Heart left ventricle (tissue), 16 donors: ENCODE measurements at regions of chr12 and their contacts with region 1.

Region 1: DNA sequence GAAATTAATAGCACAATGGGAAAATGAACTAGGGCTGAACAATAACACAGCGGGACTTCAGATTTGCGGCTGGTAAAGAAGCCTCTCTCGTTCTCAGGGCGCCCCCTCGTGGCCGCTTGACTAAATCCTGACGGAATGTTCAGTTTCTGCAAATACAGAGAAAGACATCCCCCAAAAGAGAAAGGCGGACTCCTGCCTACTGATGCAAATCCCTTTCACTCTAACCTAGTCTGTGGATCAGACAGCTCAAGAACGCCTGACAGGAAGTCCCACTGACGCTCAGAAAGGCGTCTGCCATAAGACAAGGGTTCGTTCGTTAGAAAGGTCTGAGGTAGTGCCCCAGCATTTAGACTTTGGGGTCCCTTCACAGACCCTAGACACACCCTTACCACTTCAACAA is 2.5 kb downstream of the NUAK1 start:
- DNase-seq: peak; percentile 87 to 92 (median 89)
- ATAC-seq: peak in 2 of 4 donors; percentile 10 to 47
- H3K4me3 ChIP-seq: peak overlapping the region; percentile 73 to 96 (median 90)
- H3K27ac ChIP-seq: peak overlapping the region; percentile 95 to 100 (median 97)
- H3K4me1 ChIP-seq: peaks cover 3 to 67% (median 50%) of the 10 kb centered on the region in 12 donors
- H3K27me3 ChIP-seq: peaks cover 0 to 33% (median 0%) of the 10 kb centered on the region in 9 donors
- CTCF ChIP-seq: peak; percentile 82 to 96 (median 89)
- POLR2A ChIP-seq: peak in 1 of 2 donors; percentile 36

Region 2: DNA sequence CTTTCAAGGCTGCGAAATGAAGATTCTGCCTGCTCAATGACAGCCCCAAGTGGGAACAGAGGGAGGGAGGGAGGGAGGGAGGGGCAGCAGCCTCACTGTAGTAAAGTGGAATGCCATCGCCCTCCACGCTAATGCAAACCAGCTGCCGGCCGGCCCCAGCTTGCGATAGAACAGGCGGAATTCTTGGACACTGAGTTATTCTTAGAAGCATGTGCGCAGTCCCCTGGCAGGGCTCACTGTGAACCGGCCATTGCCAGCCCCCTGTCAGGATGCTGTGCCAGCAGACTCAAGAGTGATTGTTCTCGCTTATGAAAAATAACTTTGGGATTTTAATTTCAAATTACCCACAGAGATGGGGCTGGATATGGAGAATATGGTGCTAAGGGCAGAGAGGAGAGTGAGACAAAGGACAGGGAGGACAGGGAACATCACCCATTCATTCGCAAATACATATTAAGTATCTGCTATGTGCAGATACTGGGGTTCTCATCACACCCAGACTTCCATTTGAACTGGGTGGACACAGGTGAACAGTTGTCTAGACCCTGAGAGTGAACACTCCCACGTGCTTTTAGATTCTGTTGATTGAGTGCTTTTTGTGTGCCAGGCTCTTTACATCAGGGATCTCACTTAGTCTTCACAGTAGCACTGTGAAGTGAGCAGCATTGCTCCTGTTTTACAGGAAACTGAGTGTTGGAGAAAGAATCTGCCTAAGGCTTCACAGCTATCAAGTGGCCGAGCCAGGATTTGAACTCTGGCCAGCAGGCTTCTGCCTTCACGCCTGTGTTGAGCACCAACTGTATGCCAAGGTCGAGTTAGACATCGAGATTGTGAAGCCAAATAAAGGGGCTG is 612.9 kb before region 1 on chr12:
- intact Hi-C with region 1: loop called in 1 of 10 experiments (anchors 10 kb)
- DNase-seq: peak; percentile 83 to 93 (median 85)
- ATAC-seq: peak; percentile 99
- H3K4me3 ChIP-seq: no peak overlapping the region
- H3K27ac ChIP-seq: peak overlapping the region; percentile 11 to 93 (median 84)
- H3K4me1 ChIP-seq: peaks cover 0 to 25% (median 14%) of the 10 kb centered on the region in 12 donors
- H3K27me3 ChIP-seq: no peaks in the 10 kb centered on the region
- CTCF ChIP-seq: no peak
- POLR2A ChIP-seq: no peak

Region 3: GRCh38 chr12:105761075-105761474 is 375.2 kb before region 1 on chr12:
- intact Hi-C with region 1: loop called in 1 of 10 experiments (anchors 10 kb)
- DNase-seq: no peak
- ATAC-seq: peak in 2 of 4 donors; percentile 26 to 71
- H3K4me3 ChIP-seq: no peak overlapping the region
- H3K27ac ChIP-seq: no peak overlapping the region
- H3K4me1 ChIP-seq: peaks cover 0 to 18% (median 5%) of the 10 kb centered on the region in 12 donors
- H3K27me3 ChIP-seq: no peaks in the 10 kb centered on the region
- CTCF ChIP-seq: no peak
- POLR2A ChIP-seq: no peak

Region 4: DNA sequence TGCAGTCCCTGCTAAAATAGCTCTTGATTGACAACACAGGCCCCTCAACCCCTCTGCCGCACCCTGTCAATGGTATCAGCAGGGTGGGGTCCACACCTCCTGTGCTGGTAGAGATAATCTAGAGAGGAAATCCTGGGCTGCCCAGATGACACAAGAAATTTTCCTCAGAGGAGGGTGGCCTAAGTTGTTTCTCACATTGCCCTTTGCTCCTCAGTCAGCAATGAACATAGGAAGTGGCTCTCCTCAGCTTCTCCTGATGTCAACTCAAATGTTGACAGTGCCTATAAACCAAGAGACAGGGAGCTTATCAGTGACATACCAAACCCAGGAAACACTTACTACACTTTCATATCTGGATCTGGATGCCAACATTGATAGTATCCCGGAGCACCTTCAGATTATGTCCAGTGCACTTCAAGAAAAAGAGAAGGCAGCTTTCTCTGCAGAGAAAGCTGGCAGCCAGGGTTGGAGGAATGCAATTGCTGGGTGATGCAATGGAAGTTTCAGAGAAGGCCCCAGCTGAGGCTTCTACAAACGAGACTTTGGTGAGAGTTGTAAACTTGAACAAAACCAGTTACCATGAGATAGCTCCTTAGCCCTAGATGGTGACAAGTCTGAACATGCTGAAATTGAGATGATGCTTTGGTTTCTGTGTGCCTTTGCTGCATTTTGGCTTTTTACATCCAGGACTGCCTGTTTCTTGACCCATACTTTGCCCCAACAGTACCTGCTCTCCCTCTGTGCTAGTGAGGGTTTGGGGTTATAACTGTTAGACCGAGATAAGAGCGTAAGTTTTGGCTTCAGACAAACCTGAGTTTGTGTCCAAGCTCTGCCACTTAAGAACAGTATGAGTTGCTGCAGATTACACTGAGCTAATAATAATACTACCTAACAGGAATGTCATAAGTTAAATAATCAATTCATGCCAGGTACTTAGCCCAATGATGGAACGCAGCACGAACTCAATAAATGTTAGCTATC is 181.0 kb before region 1 on chr12:
- intact Hi-C with region 1: loop called in 5 of 10 experiments (anchors 5 to 10 kb)
- DNase-seq: no peak
- ATAC-seq: peak in 1 of 4 donors; percentile 67
- H3K4me3 ChIP-seq: no peak overlapping the region
- H3K27ac ChIP-seq: peak overlapping the region in 6 of 12 donors; percentile 8 to 59 (median 19)
- H3K4me1 ChIP-seq: peaks cover 0 to 36% (median 6%) of the 10 kb centered on the region in 12 donors
- H3K27me3 ChIP-seq: no peaks in the 10 kb centered on the region
- CTCF ChIP-seq: no peak
- POLR2A ChIP-seq: no peak

Region 5: DNA sequence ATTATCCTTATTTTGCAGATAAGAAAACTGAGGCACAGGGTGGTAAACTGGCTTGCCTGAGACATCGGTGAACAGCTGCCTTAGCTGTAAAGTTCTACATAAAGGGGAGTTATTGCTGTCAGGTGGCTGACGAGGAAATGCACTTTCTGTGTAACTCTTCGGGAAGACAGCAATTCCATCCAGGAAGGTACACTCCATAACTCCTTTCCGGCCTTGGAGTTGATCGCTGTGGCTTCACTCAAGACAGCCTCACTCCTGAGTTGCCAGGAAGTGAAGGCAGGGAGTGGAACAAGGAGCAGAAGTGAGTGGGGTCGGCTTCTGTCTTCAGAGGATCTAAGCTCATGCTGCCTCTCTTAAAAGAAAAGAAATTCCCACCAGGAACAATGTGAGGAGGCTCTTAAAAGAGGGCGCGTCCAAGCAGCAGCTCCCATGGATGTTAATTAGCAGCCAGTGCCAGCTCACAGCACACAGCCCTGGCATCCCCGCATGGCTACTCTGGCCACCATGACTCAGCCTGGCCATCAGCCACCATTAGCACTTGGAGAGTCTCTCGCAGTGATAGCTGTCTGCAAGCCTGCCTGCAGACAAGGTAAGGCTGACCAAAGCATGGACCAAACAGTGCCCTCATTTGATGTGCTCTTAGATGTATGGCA is 57.8 kb before region 1 on chr12:
- intact Hi-C with region 1: loop called in 4 of 10 experiments (anchors 5 to 10 kb)
- DNase-seq: peak; percentile 68 to 86 (median 76)
- ATAC-seq: peak; percentile 74 to 84 (median 80)
- H3K4me3 ChIP-seq: no peak overlapping the region
- H3K27ac ChIP-seq: peak overlapping the region in 9 of 12 donors; percentile 0 to 92 (median 79)
- H3K4me1 ChIP-seq: peaks cover 7 to 85% (median 57%) of the 10 kb centered on the region in 12 donors
- H3K27me3 ChIP-seq: no peaks in the 10 kb centered on the region
- CTCF ChIP-seq: no peak
- POLR2A ChIP-seq: no peak

Region 6: GRCh38 chr12:106223485-106224354 is 87.5 kb after region 1 on chr12:
- intact Hi-C with region 1: loop called in 2 of 10 experiments (anchors 5 kb)
- DNase-seq: peak; percentile 68 to 79 (median 74)
- ATAC-seq: peak; percentile 38 to 79 (median 75)
- H3K4me3 ChIP-seq: no peak overlapping the region
- H3K27ac ChIP-seq: no peak overlapping the region
- H3K4me1 ChIP-seq: peaks cover 0 to 19% (median 8%) of the 10 kb centered on the region in 12 donors
- H3K27me3 ChIP-seq: no peaks in the 10 kb centered on the region
- CTCF ChIP-seq: peak; percentile 92 to 98 (median 94)
- POLR2A ChIP-seq: no peak

Region 7: GRCh38 chr12:106573239-106573638 is 437.0 kb after region 1 on chr12:
- intact Hi-C with region 1: no loop called
- DNase-seq: no peak
- ATAC-seq: no peak
- H3K4me3 ChIP-seq: no peak overlapping the region
- H3K27ac ChIP-seq: no peak overlapping the region
- H3K4me1 ChIP-seq: no peaks in the 10 kb centered on the region
- H3K27me3 ChIP-seq: peaks cover 0 to 33% (median 10%) of the 10 kb centered on the region in 9 donors
- CTCF ChIP-seq: no peak
- POLR2A ChIP-seq: no peak